CD4-positive, alpha-beta T cell (primary cell): ENCODE measurements at regions of chr14 and their contacts with region 1.

Region 1: DNA sequence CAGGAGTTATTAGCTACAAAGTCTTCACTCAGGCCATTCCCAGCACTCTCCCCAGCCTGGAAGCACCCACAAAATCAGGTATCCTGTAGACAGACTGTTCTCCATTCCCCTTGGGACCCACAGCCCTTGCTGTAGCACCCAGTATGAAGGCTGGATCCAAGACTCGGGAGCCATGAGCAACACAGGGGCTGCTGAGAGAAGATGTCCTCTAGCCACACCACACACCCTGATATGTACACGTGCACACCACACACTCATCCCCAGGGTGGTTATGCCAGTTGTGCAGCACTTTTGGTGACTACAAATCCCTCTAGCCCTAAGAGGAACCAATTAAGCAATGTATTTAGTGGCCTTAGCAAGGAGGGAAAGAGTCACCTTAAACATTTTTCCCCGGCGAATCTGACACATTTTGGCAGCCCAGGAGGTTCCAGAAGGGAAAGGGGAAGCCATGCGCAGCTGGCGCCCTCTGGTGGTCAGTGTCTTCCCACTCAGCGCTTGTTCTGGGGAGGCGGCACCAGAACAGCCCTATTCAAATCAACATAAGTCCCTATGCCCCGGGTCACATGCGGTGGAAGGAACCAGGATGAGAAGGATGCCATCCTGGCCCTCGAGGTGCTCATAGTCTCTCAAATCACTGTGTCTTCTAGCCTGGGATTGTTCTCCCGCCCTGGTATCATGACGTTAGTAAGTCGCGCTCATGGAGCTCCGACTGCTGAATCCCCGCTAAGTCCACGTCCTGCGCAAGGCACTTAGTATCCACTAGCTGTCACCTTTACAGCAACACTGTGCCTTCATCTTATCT is 96.9 kb downstream of the GCH1 start:
- DNase-seq: peak; percentile 40 to 83 (median 62)
- ATAC-seq: peak; percentile 80
- H3K4me3 ChIP-seq: no peak overlapping the region
- H3K4me3 Mint-ChIP-seq: no peak overlapping the region
- H3K27ac ChIP-seq: no peak overlapping the region
- H3K27ac Mint-ChIP-seq: no peak overlapping the region
- H3K4me1 ChIP-seq: peaks cover 7% of the 10 kb centered on the region
- H3K4me1 Mint-ChIP-seq: peaks cover 5% of the 10 kb centered on the region
- H3K27me3 ChIP-seq: peaks cover 3 to 4% of the 10 kb centered on the region in 2 experiments
- H3K27me3 Mint-ChIP-seq: peaks cover 10% of the 10 kb centered on the region
- CTCF ChIP-seq: peak; percentile 88

Region 2: DNA sequence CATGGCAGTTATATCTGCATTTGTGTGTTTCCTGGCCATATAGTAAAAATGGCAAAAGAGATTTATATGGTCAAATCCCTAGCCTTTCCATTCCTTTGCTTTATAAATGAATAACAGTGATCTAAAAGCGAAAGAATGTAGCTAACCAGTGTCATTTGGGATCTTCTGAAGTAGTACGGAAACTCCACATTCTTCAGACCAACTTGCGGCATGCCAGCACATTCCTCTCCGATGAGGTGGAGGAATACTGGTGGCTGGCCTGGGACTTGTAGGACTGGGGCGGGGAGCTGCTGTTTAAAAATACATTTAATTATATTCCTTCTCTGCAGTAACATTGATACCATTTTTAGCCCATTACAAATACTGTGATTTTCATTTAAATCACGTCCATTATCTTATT is 153.5 kb before region 1 on chr14:
- CTCF ChIA-PET with region 1: no interaction called
- POLR2A ChIA-PET with region 1: no interaction called
- intact Hi-C with region 1: no loop called
- DNase-seq: no peak
- ATAC-seq: no peak
- H3K4me3 ChIP-seq: no peak overlapping the region
- H3K4me3 Mint-ChIP-seq: no peak overlapping the region
- H3K27ac ChIP-seq: no peak overlapping the region
- H3K27ac Mint-ChIP-seq: no peak overlapping the region
- H3K4me1 ChIP-seq: no peaks in the 10 kb centered on the region
- H3K4me1 Mint-ChIP-seq: no peaks in the 10 kb centered on the region
- H3K27me3 ChIP-seq: no peaks in the 10 kb centered on the region
- H3K27me3 Mint-ChIP-seq: peaks cover 31% of the 10 kb centered on the region
- CTCF ChIP-seq: no peak

Region 3: DNA sequence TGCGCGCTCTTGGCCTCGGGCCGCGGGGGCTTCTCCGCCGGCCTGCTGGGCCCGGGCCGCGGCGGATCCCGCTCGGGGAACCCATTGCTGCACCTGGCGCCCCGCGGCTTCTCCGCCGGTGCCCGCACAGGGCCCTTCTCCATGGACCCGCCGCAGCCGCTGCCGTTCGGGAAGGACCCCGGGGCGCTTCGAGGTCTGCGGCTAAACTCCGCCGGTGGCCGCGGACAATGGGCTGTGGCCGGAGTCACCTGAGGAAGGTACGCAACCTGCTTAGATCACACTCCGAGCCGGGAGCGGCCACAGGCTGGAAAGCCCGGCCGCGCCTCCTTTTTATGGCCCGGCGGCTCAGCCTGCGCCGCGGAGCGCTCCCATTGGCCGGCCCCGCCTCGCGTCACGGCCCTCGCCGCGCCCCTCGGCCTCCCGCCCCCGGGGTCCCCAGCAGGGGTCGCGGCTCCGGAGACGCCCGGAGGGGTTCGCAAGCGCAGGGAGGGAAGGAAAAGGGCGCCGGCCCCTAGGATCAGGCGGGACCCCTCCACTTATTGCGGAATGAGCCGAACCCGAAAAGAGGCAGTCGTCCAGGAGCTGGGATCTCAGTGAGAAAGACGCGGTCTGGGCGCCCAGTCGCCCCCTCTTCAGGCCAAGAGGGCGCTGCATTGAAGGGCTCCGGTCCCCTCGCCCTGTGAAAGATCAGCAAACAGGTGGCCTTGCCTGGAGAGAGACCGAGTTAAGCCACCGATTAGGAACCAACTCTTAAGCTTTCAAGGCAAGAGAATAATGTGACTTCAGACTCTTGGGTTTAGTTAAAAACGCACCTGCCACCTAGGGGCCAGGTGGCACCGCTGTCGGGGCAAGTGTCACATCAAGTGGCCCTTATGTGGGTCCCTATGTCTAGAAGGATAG is 97.0 kb after region 1 on chr14 and contains the start of gene GCH1:
- CTCF ChIA-PET with region 1: interaction called, 3 read pairs
- POLR2A ChIA-PET with region 1: no interaction called
- intact Hi-C with region 1: loop called (anchors 1 to 5 kb)
- DNase-seq: peak; percentile 42 to 91 (median 65)
- ATAC-seq: peak; percentile 69
- H3K4me3 ChIP-seq: peak within 1 kb of the TSS; percentile 97
- H3K4me3 Mint-ChIP-seq: peak within 1 kb of the TSS; percentile 97
- H3K27ac ChIP-seq: peak within 1 kb of the TSS; percentile 92 to 95
- H3K27ac Mint-ChIP-seq: peak within 1 kb of the TSS; percentile 85
- H3K4me1 ChIP-seq: peaks cover 35% of the 10 kb centered on the region
- H3K4me1 Mint-ChIP-seq: peaks cover 24% of the 10 kb centered on the region
- H3K27me3 ChIP-seq: no peaks in the 10 kb centered on the region
- H3K27me3 Mint-ChIP-seq: no peaks in the 10 kb centered on the region
- CTCF ChIP-seq: peak; percentile 80
- total RNA-seq, gene GCH1: 18.4 to 20.4 TPM

Region 4: GRCh38 chr14:54908190-54908589 is 102.5 kb after region 1 on chr14:
- CTCF ChIA-PET with region 1: interaction called, 3 read pairs
- POLR2A ChIA-PET with region 1: no interaction called
- intact Hi-C with region 1: loop called (anchors 1 to 5 kb)
- DNase-seq: peak in 3 of 14 experiments; percentile 37 to 68 (median 41)
- ATAC-seq: peak; percentile 32
- H3K4me3 ChIP-seq: peak overlapping the region; percentile 20
- H3K4me3 Mint-ChIP-seq: peak overlapping the region; percentile 49
- H3K27ac ChIP-seq: no peak overlapping the region
- H3K27ac Mint-ChIP-seq: no peak overlapping the region
- H3K4me1 ChIP-seq: peaks cover 6% of the 10 kb centered on the region
- H3K4me1 Mint-ChIP-seq: peaks cover 13% of the 10 kb centered on the region
- H3K27me3 ChIP-seq: no peaks in the 10 kb centered on the region
- H3K27me3 Mint-ChIP-seq: no peaks in the 10 kb centered on the region
- CTCF ChIP-seq: no peak